ENCODE measurements at regions of chr13 and their contacts with region 1.

Region 1: DNA sequence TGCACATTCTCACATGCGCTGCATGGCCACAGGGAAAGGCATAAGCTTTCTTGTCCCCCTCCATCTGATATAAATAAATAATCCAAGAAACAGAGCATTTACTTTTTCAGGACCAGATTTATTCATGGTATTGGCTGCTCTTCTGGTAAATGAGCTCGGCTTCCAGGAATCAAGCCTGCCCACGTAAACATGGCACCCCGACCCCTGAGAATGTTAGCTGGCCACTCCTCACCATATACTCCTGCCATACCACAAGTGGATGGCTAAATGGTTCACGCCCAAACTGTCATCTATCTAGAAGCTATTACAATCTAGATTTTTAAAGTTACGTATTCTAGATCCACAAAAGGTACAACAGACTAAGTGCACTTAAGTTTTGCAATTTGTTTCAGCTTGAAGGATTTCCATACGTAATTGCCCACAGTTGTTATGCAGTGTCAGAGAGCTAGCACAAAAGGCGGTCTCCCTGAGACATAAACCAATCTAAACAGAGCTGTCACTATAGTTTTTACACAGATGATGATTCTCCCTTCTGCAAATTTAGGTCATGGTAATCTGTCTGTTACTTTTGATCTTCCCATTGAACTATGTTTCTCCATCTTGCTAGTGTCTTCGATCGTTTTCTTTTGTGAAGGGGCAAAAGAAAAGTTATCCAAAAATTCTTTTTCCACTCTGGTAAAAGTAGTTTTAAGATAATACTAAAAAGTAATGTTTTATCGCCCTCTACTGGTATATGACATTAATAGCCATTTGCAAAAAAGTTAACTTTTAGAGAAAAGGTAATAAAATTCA is 16.2 kb upstream of the FOXO1 start:
- DNase-seq: no peak
- H3K4me3 ChIP-seq: no peak overlapping the region
- H3K27ac ChIP-seq: peak overlapping the region; percentile 29 to 42
- H3K4me1 ChIP-seq: no peaks in the 10 kb centered on the region
- H3K27me3 ChIP-seq: no peaks in the 10 kb centered on the region
- CTCF ChIP-seq: peak; percentile 30 to 72 (median 60)
- POLR2A ChIP-seq: no peak

Region 2: GRCh38 chr13:39684531-39685137 is 998.0 kb before region 1 on chr13:
- intact Hi-C with region 1: loop called (anchors 10 kb)
- DNase-seq: no peak
- H3K4me3 ChIP-seq: no peak overlapping the region
- H3K27ac ChIP-seq: no peak overlapping the region
- H3K4me1 ChIP-seq: no peaks in the 10 kb centered on the region
- H3K27me3 ChIP-seq: no peaks in the 10 kb centered on the region
- CTCF ChIP-seq: peak; percentile 30 to 68 (median 48)
- POLR2A ChIP-seq: no peak

Region 3: DNA sequence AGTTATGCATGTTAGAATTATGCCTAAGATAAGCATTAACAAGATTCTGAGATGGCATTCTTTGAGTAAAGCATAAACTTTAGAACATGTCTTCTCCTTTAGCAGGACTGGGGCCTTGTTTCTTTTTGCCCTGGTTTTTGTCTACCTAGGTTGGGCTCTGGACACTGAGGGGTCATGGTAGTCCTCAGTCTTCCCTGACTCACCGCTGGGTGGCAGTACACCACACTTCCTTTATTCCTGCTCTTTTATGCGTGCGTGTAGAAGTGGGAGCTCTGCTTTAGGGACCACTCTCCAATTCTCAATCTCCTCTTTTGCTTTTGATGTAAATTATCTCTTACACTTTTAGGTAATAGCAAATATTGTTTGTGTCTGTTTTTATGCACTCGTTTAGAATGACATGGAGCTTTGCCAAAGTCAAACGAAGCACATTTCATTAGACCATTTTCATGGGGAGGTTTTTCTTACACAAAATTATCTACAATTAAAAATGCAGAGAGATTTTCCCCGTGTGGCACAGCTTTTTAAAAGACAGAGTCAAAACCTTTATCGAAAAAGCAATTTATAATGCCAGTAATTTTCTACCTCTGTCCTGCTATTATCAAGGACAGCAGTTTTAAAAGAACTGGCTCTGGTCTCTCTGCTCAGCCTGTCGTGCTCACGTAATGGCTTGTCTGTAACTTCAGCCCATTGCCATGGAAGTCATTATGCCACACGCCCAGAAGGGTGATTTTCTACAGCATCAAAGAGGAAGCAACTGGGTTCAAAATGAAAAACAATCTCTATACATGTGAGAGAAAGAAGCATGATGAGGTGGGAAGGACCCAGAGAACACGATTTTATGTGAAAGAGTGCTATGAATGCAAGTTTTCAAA is 613.2 kb before region 1 on chr13:
- intact Hi-C with region 1: loop called (anchors 5 kb)
- DNase-seq: peak; percentile 84 to 87
- H3K4me3 ChIP-seq: no peak overlapping the region
- H3K27ac ChIP-seq: peak overlapping the region; percentile 56 to 64
- H3K4me1 ChIP-seq: peaks cover 0 to 4% of the 10 kb centered on the region in 2 donors
- H3K27me3 ChIP-seq: no peaks in the 10 kb centered on the region
- CTCF ChIP-seq: peak; percentile 78 to 87 (median 84)
- POLR2A ChIP-seq: no peak

Region 4: GRCh38 chr13:40344270-40345148 is 338.1 kb before region 1 on chr13:
- intact Hi-C with region 1: no loop called
- DNase-seq: no peak
- H3K4me3 ChIP-seq: no peak overlapping the region
- H3K27ac ChIP-seq: no peak overlapping the region
- H3K4me1 ChIP-seq: no peaks in the 10 kb centered on the region
- H3K27me3 ChIP-seq: no peaks in the 10 kb centered on the region
- CTCF ChIP-seq: no peak
- POLR2A ChIP-seq: no peak

Measured in uterus (tissue), 4 donors.